ENCODE measurements at regions of chr2 and their contacts with region 1.

Region 1: GRCh38 chr2:20225294-20226151 is 593 bp upstream of the SDC1 start:
- DNase-seq: peak; percentile 76

Region 2: GRCh38 chr2:20106746-20107145 is 118.8 kb before region 1 on chr2:
- intact Hi-C with region 1: loop called (anchors 10 kb)
- DNase-seq: no peak

Region 3: DNA sequence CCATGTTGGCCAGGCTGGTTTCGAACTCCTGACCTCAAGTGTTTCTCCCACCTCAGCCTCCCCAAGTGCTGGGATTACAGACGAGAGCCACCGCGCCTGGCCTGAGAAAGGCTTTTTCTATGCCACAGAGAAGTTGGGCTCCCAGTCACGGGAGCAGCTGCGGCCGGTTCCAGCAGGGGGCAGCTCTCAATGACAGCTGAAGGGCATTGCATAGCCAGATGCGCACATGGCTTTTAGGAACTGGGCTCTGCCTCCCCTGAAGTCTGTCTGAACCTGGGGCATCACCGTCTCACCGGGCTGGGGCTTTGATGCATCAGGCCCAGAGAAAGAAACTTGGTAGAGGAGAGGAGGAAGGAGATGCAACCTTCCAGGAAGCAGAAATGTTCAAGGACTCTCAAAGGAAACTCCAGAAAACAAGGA is 89.9 kb before region 1 on chr2:
- intact Hi-C with region 1: loop called (anchors 10 kb)
- DNase-seq: peak; percentile 75

Measured in cardiac septum (tissue), 1 donor.